WTC11 (cell line): ENCODE measurements at regions of chr20 and their contacts with region 1.

Region 1: GRCh38 chr20:33666293-33667244 is at the start of gene ACTL10:
- DNase-seq: peak; percentile 98
- ATAC-seq: peak; percentile 82
- H3K4me3 Mint-ChIP-seq: peak within 1 kb of the TSS; percentile 80
- H3K27ac Mint-ChIP-seq: peak within 1 kb of the TSS; percentile 91
- H3K4me1 Mint-ChIP-seq: peaks cover 28% of the 10 kb centered on the region
- H3K27me3 Mint-ChIP-seq: peaks cover 16% of the 10 kb centered on the region
- CTCF ChIP-seq: no peak
- total RNA-seq, gene ACTL10: 1.3 to 1.9 TPM (median 1.5 TPM) in 3 replicates

Region 2: GRCh38 chr20:33443512-33444239 is 222.9 kb before region 1 on chr20 and contains the start of gene SNTA1:
- CTCF ChIA-PET with region 1: interaction called, 31 read pairs
- POLR2A ChIA-PET with region 1: no interaction called
- DNase-seq: peak; percentile 97
- ATAC-seq: peak; percentile 94
- H3K4me3 Mint-ChIP-seq: peak within 1 kb of the TSS; percentile 86
- H3K27ac Mint-ChIP-seq: peak within 1 kb of the TSS; percentile 80
- H3K4me1 Mint-ChIP-seq: peaks cover 12% of the 10 kb centered on the region
- H3K27me3 Mint-ChIP-seq: peaks cover 42% of the 10 kb centered on the region
- CTCF ChIP-seq: no peak
- total RNA-seq, gene SNTA1: 5.3 to 6.3 TPM (median 6.2 TPM) in 3 replicates

Region 3: GRCh38 chr20:33489495-33490022 is 177.0 kb before region 1 on chr20:
- CTCF ChIA-PET with region 1: interaction called, 13 read pairs
- POLR2A ChIA-PET with region 1: interaction called, 4 read pairs
- DNase-seq: peak; percentile 98
- ATAC-seq: peak; percentile 96
- H3K4me3 Mint-ChIP-seq: peak overlapping the region; percentile 61
- H3K27ac Mint-ChIP-seq: peak overlapping the region; percentile 76
- H3K4me1 Mint-ChIP-seq: peaks cover 9% of the 10 kb centered on the region
- H3K27me3 Mint-ChIP-seq: no peaks in the 10 kb centered on the region
- CTCF ChIP-seq: no peak

Region 4: GRCh38 chr20:33531047-33531877 is 135.3 kb before region 1 on chr20:
- CTCF ChIA-PET with region 1: no interaction called
- POLR2A ChIA-PET with region 1: no interaction called
- DNase-seq: no peak
- ATAC-seq: no peak
- H3K4me3 Mint-ChIP-seq: no peak overlapping the region
- H3K27ac Mint-ChIP-seq: peak overlapping the region; percentile 31
- H3K4me1 Mint-ChIP-seq: peaks cover 3% of the 10 kb centered on the region; the same call in 1 of the 2 replicates
- H3K27me3 Mint-ChIP-seq: no peaks in the 10 kb centered on the region
- CTCF ChIP-seq: no peak

Region 5: GRCh38 chr20:33679758-33680485 is 13.4 kb after region 1 on chr20:
- CTCF ChIA-PET with region 1: interaction called, 32 read pairs
- POLR2A ChIA-PET with region 1: interaction called, 12 read pairs
- DNase-seq: no peak
- ATAC-seq: no peak
- H3K4me3 Mint-ChIP-seq: no peak overlapping the region
- H3K27ac Mint-ChIP-seq: 0 out of 2 replicates have a peak overlapping the region, but pooled peaks have one; percentile 19
- H3K4me1 Mint-ChIP-seq: peaks cover 25% of the 10 kb centered on the region
- H3K27me3 Mint-ChIP-seq: no peaks in the 10 kb centered on the region
- CTCF ChIP-seq: no peak

Region 6: GRCh38 chr20:33719989-33720709 is 53.6 kb after region 1 on chr20 and contains the start of gene PXMP4:
- CTCF ChIA-PET with region 1: interaction called, 17 read pairs
- POLR2A ChIA-PET with region 1: interaction called, 4 read pairs
- DNase-seq: peak; percentile 85
- ATAC-seq: peak; percentile 98
- H3K4me3 Mint-ChIP-seq: peak within 1 kb of the TSS; percentile 70
- H3K27ac Mint-ChIP-seq: peak within 1 kb of the TSS; percentile 7; the same call in 1 of the 2 replicates
- H3K4me1 Mint-ChIP-seq: peaks cover 4% of the 10 kb centered on the region
- H3K27me3 Mint-ChIP-seq: peaks cover 6% of the 10 kb centered on the region; the same call in 1 of the 2 replicates
- CTCF ChIP-seq: no peak
- total RNA-seq, gene PXMP4: 3.3 to 6.0 TPM (median 5.8 TPM) in 3 replicates